HEK293 (cell line): ENCODE measurements at regions of chr22 and their contacts with region 1.

Region 1: DNA sequence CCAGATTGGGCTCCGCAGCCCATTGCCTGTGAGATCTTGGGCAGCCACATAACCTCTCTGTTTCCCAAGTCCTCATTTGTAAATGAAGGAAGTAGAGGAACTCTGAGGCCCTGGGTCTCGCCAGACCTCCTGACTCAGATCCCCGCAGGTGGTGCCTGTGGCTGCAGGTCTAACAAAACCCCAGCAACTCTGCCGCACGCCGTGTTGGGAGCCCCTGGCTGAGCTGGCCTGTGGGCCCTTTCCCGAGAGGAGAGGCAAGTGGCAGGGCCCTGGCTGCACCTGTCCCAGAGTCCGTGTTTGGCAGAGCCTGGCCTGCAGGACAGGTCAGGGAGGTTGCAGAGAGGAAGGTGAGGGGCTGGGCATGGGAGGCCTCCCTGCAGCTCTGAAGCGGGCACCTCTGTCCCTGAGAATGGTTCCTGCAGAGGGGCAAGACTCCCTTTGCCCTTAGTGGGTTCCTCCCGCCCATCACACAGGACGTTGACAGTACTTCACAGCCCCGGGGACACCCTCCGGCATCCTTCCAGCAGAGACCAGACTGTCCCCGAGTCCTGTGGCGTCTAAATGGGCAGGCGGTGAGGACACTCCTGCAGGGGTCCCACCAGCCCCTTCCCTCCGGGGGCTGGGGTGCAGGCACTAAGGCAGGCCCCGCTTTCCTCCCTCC is 67.7 kb downstream of the ARHGAP8 start:
- H3K4me3 ChIP-seq: no peak overlapping the region
- H3K27ac ChIP-seq: no peak overlapping the region
- H3K4me1 ChIP-seq: no peaks in the 10 kb centered on the region
- CTCF ChIP-seq: no peak

Region 2: GRCh38 chr22:44753544-44754194 is 66.4 kb before region 1 on chr22:
- CTCF ChIA-PET with region 1: interaction called, 11 read pairs
- POLR2A ChIA-PET with region 1: no interaction called
- H3K4me3 ChIP-seq: peak overlapping the region; percentile 57
- H3K27ac ChIP-seq: peak overlapping the region; percentile 1; the same call in 1 of the 2 replicates
- H3K4me1 ChIP-seq: peaks cover 20% of the 10 kb centered on the region
- CTCF ChIP-seq: no peak

Region 3: GRCh38 chr22:44780876-44781449 is 39.1 kb before region 1 on chr22:
- CTCF ChIA-PET with region 1: no interaction called
- POLR2A ChIA-PET with region 1: no interaction called
- H3K4me3 ChIP-seq: no peak overlapping the region
- H3K27ac ChIP-seq: no peak overlapping the region
- H3K4me1 ChIP-seq: peaks cover 5% of the 10 kb centered on the region; the same call in 1 of the 2 replicates
- CTCF ChIP-seq: no peak